Ascending aorta (tissue), 2 donors: ENCODE measurements at regions of chr2 and their contacts with region 1.

Region 1: GRCh38 chr2:27217217-27218121 is at the start of gene CAD:
- DNase-seq: peak; percentile 59 to 91
- H3K4me3 ChIP-seq: peak within 1 kb of the TSS; percentile 53 to 72
- H3K27ac ChIP-seq: peak within 1 kb of the TSS; percentile 53 to 54
- H3K4me1 ChIP-seq: peaks cover 12 to 18% of the 10 kb centered on the region in 2 donors
- H3K27me3 ChIP-seq: no peaks in the 10 kb centered on the region
- CTCF ChIP-seq: peak; percentile 30 to 32 (median 30)
- total RNA-seq, gene CAD: 63.4 TPM

Region 2: DNA sequence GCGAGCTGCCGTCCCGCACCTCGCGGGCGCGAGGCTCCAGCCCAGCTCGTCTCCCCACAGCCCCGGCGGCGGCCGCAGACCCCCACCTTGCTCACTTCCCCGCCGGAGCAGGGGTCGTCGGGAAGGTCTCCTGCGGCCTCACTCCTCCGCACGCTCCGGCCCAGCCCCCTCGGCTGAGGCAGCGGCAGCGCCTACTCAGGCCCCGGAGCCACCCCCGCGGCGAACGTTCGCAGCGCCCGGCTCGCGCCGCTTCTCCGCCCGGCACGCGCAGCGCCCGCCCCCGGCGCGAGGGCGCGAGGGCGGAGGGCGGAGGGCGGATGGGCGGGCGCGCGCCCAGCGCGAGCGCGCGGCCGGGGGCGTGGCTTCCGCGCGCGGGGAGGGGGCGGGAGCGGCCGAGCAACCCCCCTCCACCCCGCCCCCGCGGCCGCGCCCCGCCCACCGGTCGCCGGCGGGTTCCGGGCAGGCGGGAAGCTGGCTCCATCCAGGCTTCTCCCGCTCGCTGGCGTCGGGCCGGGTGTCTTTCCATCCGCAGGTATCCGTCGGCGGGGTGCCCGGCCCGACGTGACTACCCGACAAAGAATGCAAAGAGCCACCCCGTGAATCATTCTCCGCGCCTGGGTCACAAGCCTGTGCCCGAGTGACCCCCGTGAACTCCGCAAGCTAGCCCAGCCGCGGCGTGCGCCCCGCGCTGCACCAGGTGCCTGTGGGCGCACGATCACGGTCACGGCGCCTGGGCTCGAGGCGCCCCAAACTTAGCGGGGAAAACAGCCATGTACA is 1544.0 kb before region 1 on chr2 and contains the start of gene DTNB:
- intact Hi-C with region 1: loop called (anchors 10 kb)
- DNase-seq: peak; percentile 59 to 92
- H3K4me3 ChIP-seq: peak within 1 kb of the TSS; percentile 77 to 85
- H3K27ac ChIP-seq: peak within 1 kb of the TSS; percentile 83 to 84
- H3K4me1 ChIP-seq: peaks cover 8 to 11% of the 10 kb centered on the region in 2 donors
- H3K27me3 ChIP-seq: no peaks in the 10 kb centered on the region
- CTCF ChIP-seq: no peak
- total RNA-seq, gene DTNB: 22.7 TPM

Region 3: GRCh38 chr2:26764078-26764887 is 453.2 kb before region 1 on chr2 and contains the start of gene SLC35F6:
- intact Hi-C with region 1: loop called (anchors 10 kb)
- DNase-seq: peak in 1 of 2 donors; percentile 89
- H3K4me3 ChIP-seq: peak within 1 kb of the TSS; percentile 75 to 96
- H3K27ac ChIP-seq: peak within 1 kb of the TSS; percentile 86 to 97
- H3K4me1 ChIP-seq: peaks cover 7 to 31% of the 10 kb centered on the region in 2 donors
- H3K27me3 ChIP-seq: no peaks in the 10 kb centered on the region
- CTCF ChIP-seq: no peak
- total RNA-seq, gene SLC35F6: 43.4 TPM

Region 4: DNA sequence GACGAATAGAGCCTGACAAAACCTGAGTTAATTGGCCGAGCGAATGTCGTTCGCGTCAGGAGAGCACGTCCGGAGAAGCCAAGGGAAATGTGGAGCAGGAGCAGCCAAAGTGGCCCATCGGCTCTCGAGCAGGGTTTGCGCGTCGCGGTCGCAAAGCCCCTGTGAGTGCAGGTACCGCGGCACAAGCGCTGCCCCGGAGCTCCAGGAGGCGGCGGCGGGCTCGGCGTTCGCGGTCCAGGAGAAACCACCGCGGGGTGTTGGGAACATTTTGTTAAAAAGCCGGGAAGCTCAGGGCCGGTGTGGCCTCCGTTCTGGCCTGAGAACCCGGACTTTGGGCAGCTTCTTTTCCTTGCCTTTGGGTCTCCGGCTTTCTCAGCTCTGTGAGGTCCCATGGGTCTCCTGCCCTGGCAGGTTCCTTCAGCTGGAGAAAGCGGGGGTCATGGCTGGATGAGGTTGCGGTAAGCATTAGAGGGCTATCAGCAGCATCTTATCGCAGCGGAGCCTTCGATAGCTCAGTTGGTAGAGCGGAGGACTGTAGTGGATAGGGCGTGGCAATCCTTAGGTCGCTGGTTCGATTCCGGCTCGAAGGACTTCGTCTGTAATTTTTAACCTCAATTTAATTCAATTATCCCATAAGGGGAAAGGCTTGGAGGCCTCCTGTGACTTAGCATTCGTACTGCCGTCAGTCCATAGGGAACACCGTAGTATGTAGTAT is 167.0 kb before region 1 on chr2:
- intact Hi-C with region 1: no loop called
- DNase-seq: peak; percentile 72 to 96
- H3K4me3 ChIP-seq: peak overlapping the region; percentile 71 to 85
- H3K27ac ChIP-seq: peak overlapping the region; percentile 85 to 93
- H3K4me1 ChIP-seq: peaks cover 0 to 4% of the 10 kb centered on the region in 2 donors
- H3K27me3 ChIP-seq: no peaks in the 10 kb centered on the region
- CTCF ChIP-seq: peak; percentile 51 to 64 (median 55)

Region 5: DNA sequence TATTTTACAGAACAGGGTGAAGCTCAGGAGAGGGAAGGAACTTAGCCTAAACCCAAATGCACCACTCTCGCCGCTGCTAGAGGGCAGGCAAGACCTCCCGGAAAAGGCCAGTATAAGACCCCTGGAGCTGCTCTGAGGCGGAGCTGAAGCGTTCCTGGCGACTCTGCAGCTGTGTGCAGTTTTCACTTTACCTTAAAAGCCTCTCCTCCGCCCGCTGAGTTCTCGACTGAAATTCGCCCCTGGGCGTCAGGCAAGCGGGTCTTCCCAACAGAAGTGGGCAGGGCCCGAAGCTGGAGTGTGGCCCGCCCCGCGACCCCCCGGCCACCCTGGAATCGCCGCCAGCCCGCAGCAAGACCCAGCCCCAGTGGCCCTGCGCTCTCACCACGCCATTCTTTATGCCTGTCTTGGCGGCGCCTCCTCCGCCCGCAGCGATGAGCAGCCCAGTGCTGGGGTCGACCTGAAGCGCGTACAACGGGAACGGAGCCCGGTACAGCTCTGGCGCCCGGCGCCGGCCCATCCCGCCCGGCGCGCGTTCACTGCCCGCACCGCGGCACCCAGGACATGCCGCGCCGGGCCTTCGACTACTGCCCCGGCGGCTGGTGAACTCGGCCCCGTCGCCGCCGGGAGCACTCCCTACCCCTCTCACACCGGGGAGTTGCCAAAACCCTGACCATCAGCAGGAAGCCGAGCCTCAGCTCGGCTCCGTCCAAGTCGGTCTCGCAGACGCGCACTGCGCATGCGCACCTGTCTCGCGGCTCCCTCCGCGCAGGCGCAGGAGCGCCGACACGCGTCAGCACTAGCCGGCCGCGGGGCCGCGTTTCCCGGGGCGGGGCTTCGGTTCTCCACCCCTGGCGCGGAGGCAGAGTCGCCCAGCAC is 83.3 kb before region 1 on chr2 and contains the start of gene PREB:
- intact Hi-C with region 1: loop called (anchors 2 kb)
- DNase-seq: peak; percentile 77 to 98
- H3K4me3 ChIP-seq: peak within 1 kb of the TSS; percentile 89 to 96
- H3K27ac ChIP-seq: peak within 1 kb of the TSS; percentile 90 to 91
- H3K4me1 ChIP-seq: peaks cover 5 to 11% of the 10 kb centered on the region in 2 donors
- H3K27me3 ChIP-seq: no peaks in the 10 kb centered on the region
- CTCF ChIP-seq: peak in 1 of 3 experiments; percentile 11
- total RNA-seq, gene PREB: 116 TPM

Region 6: GRCh38 chr2:27275211-27276150 is 58.0 kb after region 1 on chr2 and contains the start of gene DNAJC5G:
- intact Hi-C with region 1: loop called (anchors 5 kb)
- DNase-seq: no peak
- H3K4me3 ChIP-seq: no peak within 1 kb of the TSS
- H3K27ac ChIP-seq: no peak within 1 kb of the TSS
- H3K4me1 ChIP-seq: no peaks in the 10 kb centered on the region
- H3K27me3 ChIP-seq: no peaks in the 10 kb centered on the region
- CTCF ChIP-seq: no peak
- total RNA-seq, gene DNAJC5G: not detected